ENCODE measurements at regions of chr5 and their contacts with region 1.

Region 1: GRCh38 chr5:160418561-160419457 is at the start of gene SLU7:
- DNase-seq: peak; percentile 98
- H3K4me3 ChIP-seq: peak within 1 kb of the TSS; percentile 70 to 100 (median 91)
- H3K27ac ChIP-seq: peak within 1 kb of the TSS; percentile 73
- H3K4me1 ChIP-seq: peaks cover 39% of the 10 kb centered on the region
- H3K27me3 ChIP-seq: no peaks in the 10 kb centered on the region
- CTCF ChIP-seq: no peak
- POLR2A ChIP-seq: no peak
- total RNA-seq, gene SLU7: 42.7 and 48.2 TPM in 2 replicates

Region 2: GRCh38 chr5:160071516-160071915 is 347.3 kb before region 1 on chr5:
- CTCF ChIA-PET with region 1: no interaction called
- POLR2A ChIA-PET with region 1: interaction called, 10 read pairs
- dilution Hi-C with region 1: no loop called
- intact Hi-C with region 1: no loop called
- DNase-seq: no peak
- H3K4me3 ChIP-seq: no peak overlapping the region
- H3K27ac ChIP-seq: peak overlapping the region; percentile 31
- H3K4me1 ChIP-seq: peaks cover 23% of the 10 kb centered on the region
- H3K27me3 ChIP-seq: no peaks in the 10 kb centered on the region
- CTCF ChIP-seq: no peak
- POLR2A ChIP-seq: no peak

Region 3: GRCh38 chr5:160399402-160400353 is 19.1 kb before region 1 on chr5 and contains the start of gene FAM200C:
- CTCF ChIA-PET with region 1: interaction called, 7 read pairs
- POLR2A ChIA-PET with region 1: interaction called, 10 read pairs
- dilution Hi-C with region 1: no loop called
- intact Hi-C with region 1: loop called (anchors 1 kb)
- DNase-seq: peak; percentile 95
- H3K4me3 ChIP-seq: peak within 1 kb of the TSS; percentile 57 to 84 (median 72)
- H3K27ac ChIP-seq: peak within 1 kb of the TSS; percentile 77
- H3K4me1 ChIP-seq: peaks cover 9% of the 10 kb centered on the region
- H3K27me3 ChIP-seq: no peaks in the 10 kb centered on the region
- CTCF ChIP-seq: no peak
- POLR2A ChIP-seq: peak; percentile 96
- total RNA-seq, gene FAM200C: 2.6 and 2.7 TPM in 2 replicates

Region 4: DNA sequence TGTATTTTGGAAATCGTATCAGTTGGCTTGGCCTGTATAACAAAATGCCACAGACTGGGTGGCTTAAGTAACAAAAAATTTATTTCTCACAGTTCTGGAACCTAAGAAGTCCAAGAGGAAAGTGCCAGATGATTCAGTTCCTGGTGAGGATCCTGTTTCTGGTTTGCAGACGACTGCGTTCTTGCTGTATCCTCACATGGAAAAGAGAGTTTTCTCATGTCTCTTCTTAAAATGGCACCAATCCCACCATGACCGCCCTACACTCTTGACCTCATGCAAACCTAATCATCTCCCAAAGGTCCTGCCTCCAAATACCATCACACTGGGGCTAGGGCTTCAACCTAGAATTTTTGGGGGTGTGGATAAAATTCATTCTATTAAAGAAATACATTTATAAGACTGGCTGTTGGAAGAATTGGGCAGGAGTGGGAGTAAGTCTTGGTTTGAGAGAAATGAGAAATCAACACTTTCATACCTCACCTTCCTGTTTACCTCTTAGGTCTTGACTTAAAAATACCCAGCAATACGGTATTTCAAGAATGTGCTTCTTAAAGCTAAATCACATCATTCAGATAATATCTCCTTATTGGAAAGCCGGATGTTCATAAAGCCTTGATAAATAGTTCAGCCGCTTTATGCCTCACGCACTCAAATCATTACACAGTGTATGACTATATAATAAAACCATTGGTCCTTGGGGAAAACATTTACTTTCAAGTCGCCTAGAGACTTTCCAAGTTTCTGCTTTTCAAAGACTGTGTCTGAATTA is 31.5 kb after region 1 on chr5:
- CTCF ChIA-PET with region 1: no interaction called
- POLR2A ChIA-PET with region 1: no interaction called
- dilution Hi-C with region 1: no loop called
- intact Hi-C with region 1: loop called (anchors 2 kb)
- DNase-seq: peak; percentile 75
- H3K4me3 ChIP-seq: no peak overlapping the region
- H3K27ac ChIP-seq: peak overlapping the region; percentile 97
- H3K4me1 ChIP-seq: peaks cover 41% of the 10 kb centered on the region
- H3K27me3 ChIP-seq: no peaks in the 10 kb centered on the region
- CTCF ChIP-seq: no peak
- POLR2A ChIP-seq: no peak